A549 (cell line): ENCODE measurements at regions of chr5 and their contacts with region 1.

Region 1: DNA sequence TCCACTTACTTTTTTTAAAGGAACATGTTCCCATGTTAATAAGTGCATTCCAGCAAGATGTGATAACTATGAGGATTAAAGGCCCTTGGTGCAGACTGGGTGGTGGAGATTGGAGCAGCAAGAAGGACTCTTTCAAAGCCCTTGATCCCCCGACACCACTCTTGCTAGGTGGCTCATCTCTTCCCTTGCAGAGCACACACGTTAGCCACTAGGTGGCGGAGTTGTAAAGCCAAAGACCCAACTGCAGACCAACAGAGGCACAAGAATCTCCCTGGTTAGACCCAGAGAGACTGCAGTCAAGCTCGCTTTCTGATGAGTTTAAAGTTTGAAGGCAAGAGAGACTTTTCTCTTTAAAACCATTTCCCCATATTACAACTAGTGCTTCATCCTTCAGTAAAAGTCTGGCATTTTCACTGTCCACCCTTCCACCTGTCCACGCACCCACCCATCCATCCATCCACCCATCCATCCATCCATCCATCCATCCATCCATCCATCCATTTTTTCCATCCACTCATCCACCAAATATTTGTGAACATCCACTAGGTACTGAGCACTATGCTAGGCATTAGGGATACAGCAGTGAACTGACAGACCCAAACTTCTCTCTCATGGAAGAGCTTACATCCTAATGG is 226.9 kb downstream of the MSX2 start:
- DNase-seq: peak; percentile 81
- ATAC-seq: peak; percentile 96 to 98
- H3K4me3 ChIP-seq: no peak overlapping the region
- H3K27ac ChIP-seq: peak overlapping the region; percentile 10 to 46; a peak in 3 of 6 replicates
- H3K4me1 ChIP-seq: no peaks in the 10 kb centered on the region
- CTCF ChIP-seq: peak; percentile 90
- EP300 ChIP-seq: no peak
- POLR2A ChIP-seq: no peak
- RAD21 ChIP-seq: peak; percentile 96 to 97

Region 2: DNA sequence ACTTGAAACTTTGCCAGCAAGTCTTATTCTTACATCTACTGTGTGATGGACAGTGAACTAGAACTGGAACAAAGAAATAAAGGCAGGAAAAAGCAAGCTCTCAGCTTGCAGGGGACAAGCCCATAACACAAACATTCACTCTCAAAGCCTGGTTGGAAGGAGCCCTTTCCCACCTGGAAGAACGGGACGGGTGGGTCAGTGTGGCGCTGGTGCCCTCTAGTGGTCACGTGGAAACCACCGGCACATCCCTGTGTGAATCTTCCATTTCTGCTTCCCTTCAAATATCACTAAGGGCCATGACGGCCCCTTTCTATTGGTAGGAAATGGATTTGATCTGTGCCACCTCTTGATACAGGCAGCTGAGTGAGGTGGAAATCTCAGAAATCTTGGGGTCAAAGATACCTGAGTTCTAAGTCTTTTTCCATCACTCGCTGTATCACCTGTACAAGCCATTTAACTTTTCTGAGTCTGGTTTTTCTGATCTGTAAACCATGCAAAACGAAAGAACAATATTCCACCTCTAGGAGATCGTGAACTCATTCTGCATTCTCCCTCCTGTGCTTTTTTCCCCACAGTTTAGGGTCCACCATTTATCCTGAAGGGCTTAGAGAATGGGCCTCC is 15.3 kb before region 1 on chr5:
- CTCF ChIA-PET with region 1: interaction called, 20 read pairs
- POLR2A ChIA-PET with region 1: no interaction called
- DNase-seq: peak; percentile 57 to 68
- ATAC-seq: peak; percentile 93 to 97
- H3K4me3 ChIP-seq: no peak overlapping the region
- H3K27ac ChIP-seq: no peak overlapping the region
- H3K4me1 ChIP-seq: no peaks in the 10 kb centered on the region
- CTCF ChIP-seq: peak; percentile 88
- EP300 ChIP-seq: no peak
- POLR2A ChIP-seq: no peak
- RAD21 ChIP-seq: peak; percentile 90 to 91

Region 3: DNA sequence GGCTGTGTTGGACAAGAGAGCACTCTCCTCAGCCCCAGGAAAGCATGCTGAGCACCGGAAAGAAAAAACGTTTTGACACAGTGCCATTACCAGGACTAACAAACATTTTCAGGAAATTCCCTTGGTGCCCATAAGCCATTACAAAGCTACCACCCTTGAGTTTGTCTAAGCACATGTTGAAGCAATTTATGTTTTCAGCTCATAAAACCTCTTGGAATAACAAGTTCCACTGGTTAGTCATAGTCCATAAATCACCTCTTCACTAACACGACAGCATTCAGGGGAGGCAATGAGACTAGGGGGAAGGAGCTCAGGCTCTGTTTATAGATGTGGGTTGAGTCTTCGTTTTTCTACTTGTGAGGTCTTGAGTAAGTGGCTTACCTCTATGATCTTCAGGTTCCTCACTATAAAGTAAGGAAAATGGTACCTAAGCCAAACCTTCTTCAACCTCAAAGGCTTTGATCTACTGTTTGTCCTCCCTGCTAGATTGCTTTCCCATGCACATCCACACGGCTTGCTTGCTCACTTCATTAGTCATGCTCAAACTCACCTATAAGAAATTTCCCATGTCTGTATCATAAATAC is 427.3 kb after region 1 on chr5:
- CTCF ChIA-PET with region 1: interaction called, 13 read pairs
- POLR2A ChIA-PET with region 1: no interaction called
- DNase-seq: peak; percentile 84 to 97
- ATAC-seq: peak; percentile 95 to 98
- H3K4me3 ChIP-seq: no peak overlapping the region
- H3K27ac ChIP-seq: peak overlapping the region; percentile 83 to 87
- H3K4me1 ChIP-seq: peaks cover 37% of the 10 kb centered on the region
- CTCF ChIP-seq: no peak
- EP300 ChIP-seq: peak; percentile 97 to 98
- POLR2A ChIP-seq: no peak
- RAD21 ChIP-seq: peak; percentile 34 to 72

Region 4: DNA sequence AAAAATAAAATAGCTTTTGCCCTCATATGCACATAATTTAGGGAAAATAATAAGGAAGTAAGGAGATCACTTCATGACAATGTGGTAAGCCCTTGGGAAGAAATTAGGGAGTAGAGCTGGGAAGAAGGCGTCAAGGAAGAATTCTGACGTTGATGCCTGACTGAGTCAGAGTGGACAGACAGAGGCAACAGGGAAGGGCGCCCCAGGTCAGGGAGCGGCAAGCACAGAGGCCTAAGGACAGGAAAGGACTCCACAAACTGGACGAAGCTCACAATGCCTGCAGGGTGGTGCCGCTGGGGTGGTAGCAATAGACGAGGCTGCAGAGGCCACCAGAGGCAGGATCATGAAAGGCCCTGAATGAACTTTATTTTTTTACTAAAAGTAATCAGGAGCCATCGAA is 485.1 kb after region 1 on chr5:
- CTCF ChIA-PET with region 1: interaction called, 27 read pairs
- POLR2A ChIA-PET with region 1: no interaction called
- DNase-seq: peak in 1 of 2 experiments; percentile 13
- ATAC-seq: no peak
- H3K4me3 ChIP-seq: no peak overlapping the region
- H3K27ac ChIP-seq: no peak overlapping the region
- H3K4me1 ChIP-seq: peaks cover 14% of the 10 kb centered on the region; the same call in 1 of the 3 replicates
- CTCF ChIP-seq: no peak
- EP300 ChIP-seq: no peak
- POLR2A ChIP-seq: no peak
- RAD21 ChIP-seq: no peak

Region 5: GRCh38 chr5:175457466-175457865 is 506.2 kb after region 1 on chr5:
- CTCF ChIA-PET with region 1: interaction called, 26 read pairs
- POLR2A ChIA-PET with region 1: no interaction called
- DNase-seq: peak in 1 of 2 experiments; percentile 33
- ATAC-seq: no peak
- H3K4me3 ChIP-seq: no peak overlapping the region
- H3K27ac ChIP-seq: no peak overlapping the region
- H3K4me1 ChIP-seq: no peaks in the 10 kb centered on the region
- CTCF ChIP-seq: no peak; the same call in 2 of the 3 replicates
- EP300 ChIP-seq: no peak
- POLR2A ChIP-seq: no peak
- RAD21 ChIP-seq: peak; percentile 42; a peak in 4 of 5 replicates